Natural killer cell (primary cell): ENCODE measurements at regions of chr16 and their contacts with region 1.

Region 1: GRCh38 chr16:25838724-25839186 is 147.0 kb downstream of the HS3ST4 start:
- DNase-seq: peak in 1 of 2 donors; percentile 64
- ATAC-seq: peak in 2 of 3 donors; percentile 43 to 61
- H3K4me3 ChIP-seq: no peak overlapping the region
- H3K4me3 Mint-ChIP-seq: no peak overlapping the region
- H3K27ac ChIP-seq: no peak overlapping the region
- H3K27ac Mint-ChIP-seq: no peak overlapping the region
- H3K4me1 ChIP-seq: no peaks in the 10 kb centered on the region
- H3K4me1 Mint-ChIP-seq: peaks cover 5 to 7% of the 10 kb centered on the region in 2 donors
- H3K27me3 ChIP-seq: no peaks in the 10 kb centered on the region
- H3K27me3 Mint-ChIP-seq: peaks cover 17% of the 10 kb centered on the region in 2 donors
- CTCF ChIP-seq: peak; percentile 76

Region 2: DNA sequence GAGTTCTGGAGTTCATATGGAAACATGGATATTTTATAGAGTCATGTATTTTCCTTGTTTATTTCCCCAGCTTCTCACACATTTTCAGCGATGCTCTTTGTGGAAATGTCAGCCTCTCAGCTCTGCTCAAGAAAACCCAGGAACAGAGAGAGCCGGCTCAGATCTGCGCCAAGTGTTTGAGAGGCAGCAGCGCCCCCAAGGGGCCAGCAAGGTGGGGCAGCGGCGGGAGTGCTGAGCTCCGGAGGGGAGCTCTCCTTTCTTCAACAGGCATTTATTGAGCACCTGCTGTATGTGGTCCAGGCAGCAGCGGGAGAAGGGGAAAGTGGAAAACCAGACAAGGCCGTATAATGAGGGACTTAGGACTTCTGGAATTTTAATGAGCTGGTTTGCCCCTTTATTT is 806.9 kb after region 1 on chr16:
- intact Hi-C with region 1: loop called (anchors 10 kb)
- DNase-seq: peak; percentile 37 to 49
- ATAC-seq: peak; percentile 58 to 84 (median 71)
- H3K4me3 ChIP-seq: no peak overlapping the region
- H3K4me3 Mint-ChIP-seq: no peak overlapping the region
- H3K27ac ChIP-seq: no peak overlapping the region
- H3K27ac Mint-ChIP-seq: peak overlapping the region in 1 of 2 donors; percentile 73
- H3K4me1 ChIP-seq: peaks cover 8% of the 10 kb centered on the region
- H3K4me1 Mint-ChIP-seq: peaks cover 6 to 10% of the 10 kb centered on the region in 2 donors
- H3K27me3 ChIP-seq: peaks cover 2% of the 10 kb centered on the region
- H3K27me3 Mint-ChIP-seq: peaks cover 12 to 18% of the 10 kb centered on the region in 2 donors
- CTCF ChIP-seq: peak; percentile 58

Region 3: DNA sequence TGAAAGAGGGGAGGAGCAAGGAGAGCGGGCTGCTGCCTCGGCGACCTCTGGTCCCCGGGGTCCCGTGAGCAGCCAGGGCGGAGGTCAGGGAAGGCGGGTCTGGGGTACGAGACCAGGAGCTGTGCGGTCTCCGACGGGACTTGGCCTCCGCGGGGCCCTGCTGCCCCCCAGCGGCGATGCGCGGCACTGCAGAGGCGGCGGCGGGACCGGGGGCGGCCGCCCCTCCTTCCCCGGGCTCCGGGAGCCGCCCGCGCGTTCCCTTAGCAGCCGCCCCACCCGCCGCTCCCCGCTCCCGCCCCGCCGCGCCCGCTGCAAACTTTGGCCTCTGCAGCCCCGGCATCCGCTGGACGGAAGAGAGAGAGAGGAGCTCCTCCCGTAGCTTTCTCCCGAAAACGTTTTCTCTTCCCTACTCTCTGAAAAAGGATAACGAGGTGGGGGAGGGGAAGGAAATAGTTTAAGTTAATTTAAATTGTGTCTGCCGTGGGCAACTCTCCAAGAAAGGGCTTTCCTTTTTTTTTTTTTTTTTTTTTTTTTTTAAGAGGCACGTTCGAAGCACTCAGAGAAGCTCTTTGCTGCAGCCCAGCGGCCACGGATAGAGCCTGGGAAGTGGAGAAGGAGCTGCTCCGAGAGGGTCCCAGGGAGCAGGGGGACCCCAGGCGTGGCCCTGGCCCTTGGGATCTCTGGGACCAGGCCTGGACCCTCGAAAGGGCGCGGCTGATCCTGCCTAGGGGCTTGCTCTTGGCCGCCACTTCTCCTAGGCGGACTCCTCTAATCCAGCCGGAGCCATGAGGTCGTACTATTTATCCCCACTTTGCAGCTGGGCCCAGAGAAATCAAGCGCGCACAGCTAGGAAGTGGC is 1271.1 kb after region 1 on chr16:
- intact Hi-C with region 1: loop called (anchors 5 kb)
- DNase-seq: peak; percentile 77 to 80
- ATAC-seq: peak; percentile 82 to 98 (median 97)
- H3K4me3 ChIP-seq: no peak overlapping the region
- H3K4me3 Mint-ChIP-seq: peak overlapping the region; percentile 80
- H3K27ac ChIP-seq: no peak overlapping the region
- H3K27ac Mint-ChIP-seq: no peak overlapping the region
- H3K4me1 ChIP-seq: peaks cover 16% of the 10 kb centered on the region
- H3K4me1 Mint-ChIP-seq: peaks cover 0 to 9% of the 10 kb centered on the region in 2 donors
- H3K27me3 ChIP-seq: no peaks in the 10 kb centered on the region
- H3K27me3 Mint-ChIP-seq: peaks cover 3 to 10% of the 10 kb centered on the region in 2 donors
- CTCF ChIP-seq: peak; percentile 96